Activated CD4-positive, alpha-beta memory T cell treated with anti-CD3 and anti-CD28 coated beads for 36 hours (primary cell): ENCODE measurements at regions of chr12 and their contacts with region 1.

Region 1: DNA sequence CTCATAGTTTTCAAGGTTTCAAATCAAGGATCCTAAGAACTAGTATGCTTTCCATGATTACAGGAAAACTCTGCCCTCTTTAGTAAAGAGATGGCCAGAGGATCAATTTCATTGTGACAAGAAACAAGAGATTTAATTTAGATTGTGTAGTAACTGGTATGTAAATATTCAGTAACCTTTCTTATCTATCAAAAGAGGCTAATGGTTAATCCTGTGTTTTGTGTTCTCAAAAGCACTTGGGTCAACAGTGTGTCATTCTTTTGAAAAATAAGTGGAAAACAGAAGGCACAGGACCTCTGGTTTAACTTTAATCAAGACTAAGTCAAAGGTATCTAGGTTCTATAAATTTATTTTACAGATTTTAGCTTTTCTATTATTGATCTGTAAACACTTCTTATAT is 56.6 kb upstream of the ERGIC2 start:
- DNase-seq: no peak
- H3K4me3 Mint-ChIP-seq: no peak overlapping the region
- H3K27ac Mint-ChIP-seq: no peak overlapping the region
- H3K4me1 Mint-ChIP-seq: no peaks in the 10 kb centered on the region
- H3K27me3 Mint-ChIP-seq: peaks cover 23% of the 10 kb centered on the region

Region 2: DNA sequence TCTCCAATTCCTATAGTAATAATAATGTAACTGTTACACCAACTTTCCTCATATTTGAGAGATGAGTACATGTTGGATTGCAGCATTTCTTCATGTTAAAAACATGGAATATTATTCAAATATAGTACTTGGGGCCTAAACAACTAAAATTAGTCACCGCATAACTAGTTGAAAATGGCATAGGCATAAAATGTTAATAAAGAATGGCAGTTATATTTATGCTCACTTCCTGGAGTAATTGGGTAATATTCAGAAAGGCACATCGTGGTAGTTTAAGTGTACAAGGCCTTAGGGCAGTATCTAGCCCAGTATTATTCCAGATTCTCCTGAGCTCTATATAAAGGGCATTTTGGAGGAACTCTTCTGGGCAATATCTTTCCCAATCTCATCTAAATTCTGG is 102.6 kb before region 1 on chr12:
- CTCF ChIA-PET with region 1: no interaction called
- POLR2A ChIA-PET with region 1: no interaction called
- intact Hi-C with region 1: no loop called
- DNase-seq: no peak
- H3K4me3 Mint-ChIP-seq: no peak overlapping the region
- H3K27ac Mint-ChIP-seq: no peak overlapping the region
- H3K4me1 Mint-ChIP-seq: no peaks in the 10 kb centered on the region
- H3K27me3 Mint-ChIP-seq: no peaks in the 10 kb centered on the region

Region 3: DNA sequence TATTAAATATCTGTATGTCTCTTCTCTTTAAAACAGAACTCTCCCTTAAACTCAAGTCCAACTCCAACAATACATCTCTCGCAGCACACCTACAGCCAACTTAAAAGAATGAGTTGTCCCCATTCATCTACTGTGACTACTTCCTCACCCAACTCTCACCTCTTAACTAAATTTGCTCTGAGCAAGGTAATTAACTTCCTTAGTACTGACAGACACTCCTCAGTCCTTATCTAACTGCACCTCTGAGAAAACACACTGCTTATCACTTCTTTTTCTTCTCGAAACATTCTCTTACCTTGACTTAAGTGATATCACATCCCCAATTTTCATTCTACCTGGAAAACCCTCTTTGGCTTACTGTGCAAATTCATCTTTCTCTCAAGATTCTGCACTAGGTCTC is 63.6 kb before region 1 on chr12:
- CTCF ChIA-PET with region 1: no interaction called
- POLR2A ChIA-PET with region 1: no interaction called
- intact Hi-C with region 1: no loop called
- DNase-seq: no peak
- H3K4me3 Mint-ChIP-seq: no peak overlapping the region
- H3K27ac Mint-ChIP-seq: no peak overlapping the region
- H3K4me1 Mint-ChIP-seq: peaks cover 27% of the 10 kb centered on the region
- H3K27me3 Mint-ChIP-seq: no peaks in the 10 kb centered on the region

Region 4: GRCh38 chr12:29414368-29414767 is 23.2 kb before region 1 on chr12:
- CTCF ChIA-PET with region 1: no interaction called
- POLR2A ChIA-PET with region 1: no interaction called
- intact Hi-C with region 1: loop called (anchors 2 kb)
- DNase-seq: no peak
- H3K4me3 Mint-ChIP-seq: no peak overlapping the region
- H3K27ac Mint-ChIP-seq: no peak overlapping the region
- H3K4me1 Mint-ChIP-seq: no peaks in the 10 kb centered on the region
- H3K27me3 Mint-ChIP-seq: peaks cover 4% of the 10 kb centered on the region